T-cell (primary cell): ENCODE measurements at regions of chr22 and their contacts with region 1.

Region 1: GRCh38 chr22:40976866-40977700 is 25.9 kb downstream of the RBX1 start:
- DNase-seq: no peak
- ATAC-seq: no peak
- H3K4me3 ChIP-seq: no peak overlapping the region
- H3K4me3 Mint-ChIP-seq: no peak overlapping the region
- H3K27ac ChIP-seq: no peak overlapping the region
- H3K27ac Mint-ChIP-seq: no peak overlapping the region
- H3K4me1 ChIP-seq: no peaks in the 10 kb centered on the region
- H3K4me1 Mint-ChIP-seq: no peaks in the 10 kb centered on the region
- H3K27me3 ChIP-seq: no peaks in the 10 kb centered on the region
- H3K27me3 Mint-ChIP-seq: no peaks in the 10 kb centered on the region

Region 2: DNA sequence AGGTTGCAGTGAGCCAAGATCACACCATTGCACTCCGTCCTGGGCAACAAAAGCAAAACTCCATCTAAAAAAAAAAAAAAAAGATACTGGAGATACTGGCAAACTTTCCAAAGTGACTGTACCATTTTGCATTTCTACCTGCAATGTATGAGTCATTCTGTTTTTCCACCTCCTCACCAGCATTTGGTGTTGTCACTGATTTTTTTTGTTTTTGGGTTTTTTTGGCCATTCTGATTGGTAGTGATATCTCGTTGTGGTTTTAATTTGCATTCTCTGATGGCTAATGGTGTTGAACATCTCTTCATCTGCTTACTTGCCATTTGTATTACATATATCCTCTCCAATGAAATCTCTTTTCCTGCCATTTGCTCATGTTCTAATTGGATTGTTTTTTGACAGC is 37.9 kb before region 1 on chr22:
- CTCF ChIA-PET with region 1: no interaction called
- POLR2A ChIA-PET with region 1: interaction called in 1 of 2 experiments, 10 read pairs
- DNase-seq: no peak
- ATAC-seq: no peak
- H3K4me3 ChIP-seq: no peak overlapping the region
- H3K4me3 Mint-ChIP-seq: no peak overlapping the region
- H3K27ac ChIP-seq: no peak overlapping the region
- H3K27ac Mint-ChIP-seq: peak overlapping the region in 1 of 2 donors; percentile 61
- H3K4me1 ChIP-seq: no peaks in the 10 kb centered on the region
- H3K4me1 Mint-ChIP-seq: peaks cover 0 to 5% (median 4%) of the 10 kb centered on the region in 3 donors
- H3K27me3 ChIP-seq: no peaks in the 10 kb centered on the region
- H3K27me3 Mint-ChIP-seq: no peaks in the 10 kb centered on the region

Region 3: GRCh38 chr22:40990430-40990829 is 13.3 kb after region 1 on chr22:
- CTCF ChIA-PET with region 1: no interaction called
- POLR2A ChIA-PET with region 1: no interaction called
- DNase-seq: no peak
- ATAC-seq: no peak
- H3K4me3 ChIP-seq: no peak overlapping the region
- H3K4me3 Mint-ChIP-seq: no peak overlapping the region
- H3K27ac ChIP-seq: no peak overlapping the region
- H3K27ac Mint-ChIP-seq: no peak overlapping the region
- H3K4me1 ChIP-seq: no peaks in the 10 kb centered on the region
- H3K4me1 Mint-ChIP-seq: no peaks in the 10 kb centered on the region
- H3K27me3 ChIP-seq: peaks cover 0 to 24% of the 10 kb centered on the region in 2 experiments
- H3K27me3 Mint-ChIP-seq: peaks cover 20 to 23% of the 10 kb centered on the region in 2 donors